ENCODE measurements at regions of chr4 and their contacts with region 1.

Region 1: GRCh38 chr4:38078590-38079421 is 118.6 kb downstream of the PTTG2 start:
- DNase-seq: no peak
- H3K4me3 ChIP-seq: no peak overlapping the region
- H3K27ac ChIP-seq: peak overlapping the region; percentile 77
- H3K4me1 ChIP-seq: peaks cover 91% of the 10 kb centered on the region
- H3K27me3 ChIP-seq: no peaks in the 10 kb centered on the region
- CTCF ChIP-seq: no peak

Region 2: GRCh38 chr4:38132107-38132673 is 53.4 kb after region 1 on chr4:
- intact Hi-C with region 1: no loop called
- DNase-seq: no peak
- H3K4me3 ChIP-seq: no peak overlapping the region
- H3K27ac ChIP-seq: peak overlapping the region; percentile 71
- H3K4me1 ChIP-seq: peaks cover 52% of the 10 kb centered on the region
- H3K27me3 ChIP-seq: no peaks in the 10 kb centered on the region
- CTCF ChIP-seq: no peak

Region 3: DNA sequence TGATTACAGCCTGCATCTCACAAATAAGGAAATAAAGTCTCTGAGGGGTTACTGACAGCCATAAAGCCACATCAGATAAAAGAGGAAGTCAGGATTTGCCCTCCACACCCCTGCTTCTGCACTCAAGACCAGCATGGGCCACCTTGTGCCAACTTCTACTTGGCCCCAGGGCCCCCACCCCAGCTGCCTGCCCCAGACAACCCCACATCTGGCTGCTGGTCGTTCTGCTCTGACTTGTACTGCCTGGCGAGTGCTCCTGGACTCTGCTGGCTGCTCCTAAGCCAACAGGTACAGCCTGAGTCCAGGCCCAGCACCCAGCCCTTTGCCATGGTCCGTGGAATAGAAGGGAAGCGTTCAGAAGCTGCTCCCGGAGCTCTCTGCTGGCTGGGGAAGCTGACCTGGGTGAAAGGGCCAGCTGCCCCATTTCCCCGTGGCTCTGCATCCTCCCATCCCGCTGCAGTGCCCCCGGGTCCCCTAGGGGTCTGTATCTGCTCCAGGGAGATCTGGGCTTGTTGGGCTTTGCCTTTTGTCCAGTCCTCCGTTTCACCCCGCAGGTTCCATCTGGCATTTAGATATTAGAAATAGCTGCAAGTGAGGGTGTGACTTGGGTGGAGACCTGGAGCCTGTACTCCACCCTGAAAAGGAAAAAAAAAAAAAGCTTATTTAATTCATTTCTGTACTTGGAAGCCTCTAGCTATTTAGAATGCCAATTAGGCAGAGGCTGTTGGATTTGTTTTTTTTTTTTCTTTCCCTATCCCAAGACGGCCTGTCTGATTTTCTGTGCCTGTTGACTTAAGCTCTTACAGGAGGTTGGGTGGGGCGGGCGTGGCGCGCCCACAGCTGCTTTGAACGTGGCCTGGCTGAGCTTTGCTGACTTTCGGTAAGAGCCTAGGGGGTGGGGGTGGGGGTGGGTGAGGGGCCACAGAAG is 76.1 kb after region 1 on chr4:
- intact Hi-C with region 1: loop called (anchors 10 kb)
- DNase-seq: peak; percentile 69
- H3K4me3 ChIP-seq: peak overlapping the region; percentile 5
- H3K27ac ChIP-seq: peak overlapping the region; percentile 87
- H3K4me1 ChIP-seq: peaks cover 48% of the 10 kb centered on the region
- H3K27me3 ChIP-seq: no peaks in the 10 kb centered on the region
- CTCF ChIP-seq: no peak

Region 4: DNA sequence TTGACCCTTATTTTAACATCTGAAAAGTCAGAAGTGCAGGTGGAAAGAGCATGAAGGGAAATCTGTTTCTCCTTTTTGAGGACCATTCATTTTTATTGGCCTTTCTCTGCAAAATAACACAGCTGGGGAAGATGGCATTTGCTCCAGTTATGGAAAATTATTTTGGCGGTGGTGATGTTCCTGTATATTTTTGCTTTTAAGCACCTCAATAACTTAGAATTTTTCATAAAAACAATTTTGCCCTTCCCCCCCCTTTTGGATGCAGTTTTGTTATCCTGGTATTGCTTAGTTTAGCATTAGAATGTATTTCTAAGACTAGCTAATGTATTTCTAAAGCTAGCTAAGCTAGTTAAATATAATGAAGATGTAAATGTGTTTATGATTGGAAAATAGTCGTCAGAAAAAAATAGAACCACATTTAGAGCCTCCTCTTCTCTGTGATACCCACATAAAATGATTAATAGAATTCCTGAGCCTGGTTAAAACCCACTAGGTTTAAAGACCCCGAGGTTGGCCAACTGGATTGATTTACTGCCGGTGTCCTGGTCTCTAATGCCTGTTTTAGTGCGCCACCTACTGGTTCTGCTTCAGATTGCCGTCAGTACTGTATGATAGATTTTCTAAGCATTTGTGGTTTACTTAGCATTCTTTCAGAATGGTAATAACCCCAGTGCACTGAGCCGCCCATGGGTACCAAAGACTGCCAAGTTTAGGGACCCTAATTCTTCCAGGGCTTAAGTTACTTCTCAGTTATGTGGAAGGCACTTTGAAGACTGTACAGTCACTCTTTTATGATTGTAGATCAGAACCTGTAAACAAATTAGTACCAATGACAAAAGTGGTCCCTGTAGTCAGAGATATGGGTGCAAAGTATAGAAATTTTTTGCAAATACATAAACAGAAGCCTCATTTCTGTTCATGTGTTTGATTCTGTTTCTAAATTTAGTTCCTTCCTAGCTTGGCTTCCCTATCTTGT is 596.6 kb after region 1 on chr4:
- intact Hi-C with region 1: loop called (anchors 10 kb)
- DNase-seq: peak; percentile 58
- H3K4me3 ChIP-seq: peak overlapping the region; percentile 74
- H3K27ac ChIP-seq: peak overlapping the region; percentile 100
- H3K4me1 ChIP-seq: peaks cover 100% of the 10 kb centered on the region
- H3K27me3 ChIP-seq: no peaks in the 10 kb centered on the region
- CTCF ChIP-seq: peak; percentile 92